ENCODE measurements at regions of chr1 and their contacts with region 1.

Region 1: DNA sequence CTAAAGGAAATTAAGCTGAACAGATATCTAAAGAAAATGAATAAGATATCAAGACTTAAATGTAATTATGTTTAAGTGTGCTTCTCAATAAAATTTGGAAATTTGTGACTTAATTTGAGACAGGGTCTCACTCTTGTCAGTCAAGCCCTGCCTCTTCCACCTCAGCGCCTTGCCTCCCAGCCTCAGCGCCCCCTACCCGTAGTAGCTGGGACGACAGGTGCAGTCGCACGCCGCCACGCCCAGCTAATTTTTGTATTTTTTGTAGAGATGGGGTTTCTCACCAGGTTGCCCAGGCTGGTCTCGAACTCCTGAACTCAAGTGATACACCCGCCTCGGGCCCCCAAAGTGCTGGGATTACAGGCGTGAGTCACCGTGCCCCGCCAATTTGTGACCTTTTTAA is 117.0 kb downstream of the CLEC20A start:
- DNase-seq: no peak
- ATAC-seq: no peak

Region 2: GRCh38 chr1:178397678-178398077 is 17.9 kb after region 1 on chr1:
- intact Hi-C with region 1: loop called (anchors 2 kb)
- DNase-seq: no peak
- ATAC-seq: no peak

Measured in left ventricle myocardium superior (tissue), 1 donor.